BJ (cell line): ENCODE measurements at regions of chr14 and their contacts with region 1.

Region 1: GRCh38 chr14:105368965-105369652 is 29.2 kb upstream of the TEX22 start:
- DNase-seq: no peak
- H3K4me3 ChIP-seq: no peak overlapping the region
- H3K27me3 ChIP-seq: no peaks in the 10 kb centered on the region
- CTCF ChIP-seq: no peak

Region 2: DNA sequence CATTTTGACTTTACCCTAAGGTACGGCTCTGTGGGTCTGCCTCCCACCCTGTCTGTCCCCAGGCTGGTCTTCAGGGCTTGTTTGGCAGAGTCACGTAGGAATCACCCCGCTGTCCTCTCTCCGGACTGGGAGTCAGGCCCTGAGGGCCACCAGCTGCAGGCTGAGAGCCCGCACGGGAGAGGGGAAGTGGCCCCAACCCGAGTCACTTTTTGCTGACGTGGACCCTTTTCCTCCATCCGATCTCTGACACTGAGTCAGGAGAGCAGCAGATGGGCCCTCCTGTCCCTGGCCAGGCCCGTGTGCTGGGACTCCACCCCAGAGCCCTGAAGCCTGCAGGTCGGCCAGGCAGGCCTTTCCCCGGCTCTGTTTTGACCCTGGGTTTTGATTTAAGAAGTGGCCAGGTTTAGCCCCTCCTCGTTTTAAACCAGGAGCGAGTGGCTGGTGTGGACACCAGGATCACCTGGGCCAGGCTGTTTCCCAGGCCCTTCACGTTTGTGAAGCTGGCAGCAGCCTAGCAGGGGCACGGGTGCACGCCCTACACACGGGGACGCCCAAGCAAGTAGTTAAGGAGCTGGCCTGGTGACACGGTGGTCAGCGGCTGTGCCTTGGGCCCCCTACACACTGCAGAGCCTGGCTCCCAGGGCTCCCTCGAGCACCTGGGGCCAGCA is 16.7 kb after region 1 on chr14:
- CTCF ChIA-PET with region 1: interaction called, 10 read pairs
- POLR2A ChIA-PET with region 1: no interaction called
- DNase-seq: no peak
- H3K4me3 ChIP-seq: no peak overlapping the region
- H3K27me3 ChIP-seq: no peaks in the 10 kb centered on the region
- CTCF ChIP-seq: no peak

Region 3: GRCh38 chr14:105480952-105481801 is 112.1 kb after region 1 on chr14:
- CTCF ChIA-PET with region 1: interaction called, 25 read pairs
- POLR2A ChIA-PET with region 1: no interaction called
- DNase-seq: no peak
- H3K4me3 ChIP-seq: peak overlapping the region; percentile 42
- H3K27me3 ChIP-seq: 0 out of 2 replicates have a peak, but pooled peaks cover 1% of the 10 kb centered on the region
- CTCF ChIP-seq: peak; percentile 99

Region 4: GRCh38 chr14:105490572-105491366 is 121.7 kb after region 1 on chr14 and contains the start of gene TEDC1:
- CTCF ChIA-PET with region 1: interaction called, 84 read pairs
- POLR2A ChIA-PET with region 1: no interaction called
- DNase-seq: peak; percentile 100
- H3K4me3 ChIP-seq: peak within 1 kb of the TSS; percentile 74
- H3K27me3 ChIP-seq: peaks cover 6% of the 10 kb centered on the region; the same call in 1 of the 2 replicates
- CTCF ChIP-seq: peak; percentile 54
- polyA plus RNA-seq, gene TEDC1: 3.3 and 6.4 TPM in 2 replicates

Region 5: DNA sequence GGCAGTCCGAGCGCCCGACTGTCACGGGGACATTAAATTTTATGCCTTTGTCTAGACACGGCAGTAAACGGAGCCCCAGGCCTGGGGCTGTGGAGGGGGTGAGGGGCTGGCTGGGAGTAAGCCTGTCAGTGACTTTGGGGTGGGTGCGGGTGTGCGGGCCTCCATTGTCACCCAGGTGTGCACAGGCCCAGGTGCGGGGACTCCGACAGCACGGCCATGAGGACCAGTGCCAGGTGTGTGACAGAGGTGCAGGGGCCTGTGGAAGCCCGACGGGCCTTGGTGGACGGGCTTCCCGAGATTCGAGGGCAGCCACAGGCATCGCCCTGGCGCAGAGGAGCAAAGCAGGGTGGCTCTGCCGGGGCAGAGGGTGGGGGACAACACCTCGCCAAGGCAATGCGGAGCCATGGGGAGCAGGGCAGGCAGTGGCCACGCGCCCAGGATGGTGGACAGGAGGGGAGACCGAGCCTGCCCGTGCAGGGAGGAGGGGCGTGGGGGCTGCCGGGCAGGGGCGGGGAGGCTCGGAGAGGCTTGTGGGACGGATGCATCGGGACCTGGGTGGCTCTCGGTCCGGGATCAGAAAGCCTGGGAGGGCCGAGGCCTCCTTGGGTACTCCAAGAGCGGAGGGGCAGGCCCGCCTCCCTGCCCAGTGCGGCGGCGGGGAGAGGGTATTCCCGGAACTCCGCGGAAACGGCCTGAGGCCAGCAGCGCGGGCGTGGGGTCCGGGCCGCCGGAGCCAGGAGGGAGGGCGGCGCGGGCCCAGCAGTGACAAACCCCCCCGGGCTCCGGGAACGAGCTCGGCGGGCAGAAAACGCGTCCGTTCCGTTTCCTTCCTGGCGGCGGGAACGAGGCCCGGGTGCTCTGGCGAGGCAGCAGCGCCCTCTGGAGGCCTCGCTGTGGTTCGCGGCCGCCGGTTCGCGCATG is 158.8 kb after region 1 on chr14:
- CTCF ChIA-PET with region 1: interaction called, 16 read pairs
- POLR2A ChIA-PET with region 1: no interaction called
- DNase-seq: no peak
- H3K4me3 ChIP-seq: peak overlapping the region; percentile 76
- H3K27me3 ChIP-seq: no peaks in the 10 kb centered on the region
- CTCF ChIP-seq: peak; percentile 67